ENCODE measurements at regions of chr12 and their contacts with region 1.

Region 1: GRCh38 chr12:98154850-98155249 is 360.5 kb upstream of the TMPO start:
- DNase-seq: peak; percentile 77
- H3K4me3 ChIP-seq: no peak overlapping the region
- H3K27ac ChIP-seq: no peak overlapping the region
- H3K4me1 ChIP-seq: peaks cover 36% of the 10 kb centered on the region
- H3K27me3 ChIP-seq: no peaks in the 10 kb centered on the region
- CTCF ChIP-seq: peak; percentile 74

Region 2: DNA sequence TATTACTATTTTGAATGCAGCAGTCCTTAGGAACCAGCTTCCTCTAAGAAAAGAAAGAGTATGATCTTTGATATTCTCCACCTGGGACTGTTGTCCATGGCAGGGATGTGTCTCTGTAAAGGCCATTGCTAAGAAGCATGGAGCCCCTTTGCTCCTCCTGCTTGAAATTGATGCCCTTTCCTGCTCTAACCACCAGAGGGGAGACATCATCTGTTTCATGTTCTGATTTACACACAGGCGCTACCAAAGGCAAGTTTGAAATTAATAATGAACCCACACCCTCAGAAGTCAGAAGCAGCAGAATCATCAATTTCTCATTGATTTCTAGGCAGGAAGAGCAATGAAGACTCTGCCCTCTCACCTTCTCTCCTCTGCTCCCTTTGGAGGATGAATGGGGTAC is 438.5 kb before region 1 on chr12:
- CTCF ChIA-PET with region 1: no interaction called
- POLR2A ChIA-PET with region 1: no interaction called
- intact Hi-C with region 1: loop called (anchors 2 kb)
- DNase-seq: peak; percentile 22
- H3K4me3 ChIP-seq: no peak overlapping the region
- H3K27ac ChIP-seq: no peak overlapping the region
- H3K4me1 ChIP-seq: no peaks in the 10 kb centered on the region
- H3K27me3 ChIP-seq: peaks cover 17% of the 10 kb centered on the region
- CTCF ChIP-seq: peak; percentile 43

Region 3: GRCh38 chr12:98037401-98038140 is 117.3 kb before region 1 on chr12:
- CTCF ChIA-PET with region 1: no interaction called
- POLR2A ChIA-PET with region 1: no interaction called
- intact Hi-C with region 1: loop called (anchors 2 kb)
- DNase-seq: peak; percentile 78
- H3K4me3 ChIP-seq: no peak overlapping the region
- H3K27ac ChIP-seq: no peak overlapping the region
- H3K4me1 ChIP-seq: no peaks in the 10 kb centered on the region
- H3K27me3 ChIP-seq: no peaks in the 10 kb centered on the region
- CTCF ChIP-seq: no peak

Measured in A673 (cell line).